ENCODE measurements at regions of chr9 and their contacts with region 1.

Region 1: DNA sequence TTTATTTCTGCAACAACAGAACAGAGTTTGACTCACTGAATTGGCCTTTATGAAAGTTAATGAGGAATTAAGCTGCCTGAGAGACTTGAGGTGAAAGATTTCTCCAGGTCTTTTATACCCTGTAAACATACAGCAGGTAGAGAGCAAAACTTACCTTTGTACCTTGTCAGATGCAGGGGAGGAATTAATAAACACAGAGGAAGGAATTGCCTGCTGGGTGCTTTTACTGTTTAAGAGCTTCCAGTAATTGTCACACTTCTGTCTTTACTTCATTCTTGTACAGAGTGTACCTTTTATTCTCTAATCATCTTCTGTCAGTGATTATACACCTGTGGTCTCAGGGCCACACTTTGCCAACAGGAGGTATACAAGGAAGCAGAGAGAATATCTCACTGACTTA is 94.0 kb upstream of the GRIN3A start:
- DNase-seq: no peak

Region 2: GRCh38 chr9:100554935-100555401 is 1277.5 kb before region 1 on chr9:
- intact Hi-C with region 1: loop called in 1 of 2 experiments (anchors 10 kb)
- DNase-seq: no peak

Region 3: DNA sequence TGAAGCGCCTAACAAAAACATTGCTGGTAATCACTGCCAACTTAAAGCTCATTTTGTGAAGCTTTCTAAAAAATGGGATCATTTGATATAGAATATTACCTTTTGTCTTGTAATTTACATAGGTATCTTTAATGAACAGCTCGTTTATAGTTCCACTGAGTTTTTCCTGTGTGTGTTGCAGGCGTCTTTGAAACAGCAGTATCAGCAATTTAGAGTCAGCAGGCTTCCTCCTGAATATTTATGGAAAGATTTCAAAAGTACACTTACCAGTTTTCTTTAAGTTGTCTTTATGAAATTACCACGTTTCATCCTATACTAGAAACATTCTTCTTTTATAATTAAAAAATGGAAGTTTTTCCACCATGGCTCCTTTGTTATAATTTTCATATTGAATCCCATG is 46.2 kb after region 1 on chr9:
- intact Hi-C with region 1: no loop called
- DNase-seq: no peak